ENCODE measurements at regions of chr9 and their contacts with region 1.

Region 1: GRCh38 chr9:129988607-129989361 is 54.2 kb downstream of the FNBP1 start:
- DNase-seq: no peak
- ATAC-seq: peak; percentile 25; the same call in 1 of the 2 replicates
- H3K4me3 ChIP-seq: no peak overlapping the region
- H3K27ac ChIP-seq: no peak overlapping the region
- H3K4me1 ChIP-seq: peaks cover 12% of the 10 kb centered on the region
- H3K27me3 ChIP-seq: no peaks in the 10 kb centered on the region
- CTCF ChIP-seq: no peak
- POLR2A ChIP-seq: no peak
- RAD21 ChIP-seq: no peak

Region 2: DNA sequence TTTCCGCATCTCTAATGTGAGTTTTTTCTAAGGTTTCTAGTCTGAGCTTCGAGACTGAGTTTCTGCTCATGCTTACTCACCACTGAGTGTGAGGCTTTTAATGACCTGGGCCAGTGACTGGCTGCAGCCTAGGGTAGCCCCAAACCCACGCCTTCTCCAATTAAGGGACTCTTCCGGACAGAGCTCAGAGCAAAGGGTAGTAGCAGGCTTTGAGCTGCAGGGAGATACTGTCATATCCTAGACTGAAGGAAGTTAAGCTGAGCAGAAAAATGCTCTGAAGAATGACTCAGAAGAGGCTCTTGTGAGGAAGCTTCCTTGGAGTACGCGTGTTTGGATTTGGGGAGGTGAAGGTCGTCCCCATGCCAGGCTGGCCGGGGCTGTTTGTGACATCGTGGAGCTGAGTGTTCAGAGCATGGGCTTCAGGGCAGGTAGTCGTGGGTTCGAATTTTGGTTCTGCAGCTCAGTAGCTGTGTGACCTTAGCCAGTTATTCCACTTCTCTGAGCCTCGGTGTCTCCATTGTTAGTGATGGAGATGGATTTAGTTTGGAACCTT is 150.0 kb before region 1 on chr9:
- CTCF ChIA-PET with region 1: no interaction called
- POLR2A ChIA-PET with region 1: no interaction called
- dilution Hi-C with region 1: no loop called
- in situ Hi-C with region 1: no loop called
- intact Hi-C with region 1: no loop called
- DNase-seq: peak; percentile 91
- ATAC-seq: peak; percentile 65
- H3K4me3 ChIP-seq: no peak overlapping the region
- H3K27ac ChIP-seq: peak overlapping the region; percentile 41
- H3K4me1 ChIP-seq: peaks cover 13% of the 10 kb centered on the region
- H3K27me3 ChIP-seq: no peaks in the 10 kb centered on the region
- CTCF ChIP-seq: no peak; the same call in 1 of the 2 replicates
- POLR2A ChIP-seq: 0 out of 2 replicates have a peak, but pooled peaks have one; percentile 27
- RAD21 ChIP-seq: peak; percentile 12; the same call in 1 of the 2 replicates

Region 3: GRCh38 chr9:129932303-129933151 is 56.3 kb before region 1 on chr9:
- CTCF ChIA-PET with region 1: no interaction called
- POLR2A ChIA-PET with region 1: interaction called, 12 read pairs
- dilution Hi-C with region 1: no loop called
- in situ Hi-C with region 1: no loop called
- intact Hi-C with region 1: no loop called
- DNase-seq: peak; percentile 10
- ATAC-seq: peak; percentile 56
- H3K4me3 ChIP-seq: no peak overlapping the region
- H3K27ac ChIP-seq: peak overlapping the region; percentile 3; the same call in 1 of the 2 replicates
- H3K4me1 ChIP-seq: peaks cover 19% of the 10 kb centered on the region
- H3K27me3 ChIP-seq: no peaks in the 10 kb centered on the region
- CTCF ChIP-seq: no peak
- POLR2A ChIP-seq: no peak
- RAD21 ChIP-seq: no peak

Region 4: DNA sequence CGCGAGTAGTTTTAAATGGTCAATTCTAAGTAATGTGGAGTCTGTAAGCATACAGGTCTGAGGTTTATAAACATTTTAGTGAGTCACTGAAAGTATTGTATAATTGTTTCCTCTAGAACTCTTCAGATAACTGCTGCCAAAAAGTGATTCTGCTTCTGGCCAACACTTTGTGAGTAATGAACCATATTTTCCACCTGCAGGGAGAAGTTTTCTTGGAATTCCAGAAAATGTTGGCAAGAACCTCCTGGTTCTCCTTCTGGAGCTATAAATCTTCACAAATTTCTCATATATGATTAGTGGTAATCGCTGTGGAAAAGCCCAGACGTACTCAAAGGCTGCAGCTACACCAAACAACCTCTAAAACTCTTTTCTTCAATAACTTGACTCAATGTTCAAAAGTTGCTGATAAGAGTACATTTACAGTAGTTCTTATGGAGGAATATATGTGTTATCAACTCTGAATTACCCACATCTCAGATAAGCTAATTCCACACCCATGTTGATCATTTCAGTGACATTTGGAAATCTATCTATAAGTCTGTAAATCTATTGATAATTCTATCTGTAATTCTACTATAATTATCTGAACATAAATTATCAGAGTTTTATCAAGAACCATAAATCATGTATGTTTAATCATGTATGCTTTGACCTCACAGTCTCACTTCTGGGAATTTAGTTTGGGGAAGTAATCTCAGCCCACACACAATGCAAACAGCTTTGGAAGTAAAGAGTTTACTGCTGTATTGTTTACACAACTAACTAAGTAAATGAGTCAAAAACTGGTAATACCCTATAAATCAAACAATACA is 19.9 kb before region 1 on chr9:
- CTCF ChIA-PET with region 1: no interaction called
- POLR2A ChIA-PET with region 1: no interaction called
- dilution Hi-C with region 1: no loop called
- in situ Hi-C with region 1: no loop called
- intact Hi-C with region 1: loop called (anchors 2 kb)
- DNase-seq: peak; percentile 93
- ATAC-seq: peak; percentile 69
- H3K4me3 ChIP-seq: no peak overlapping the region
- H3K27ac ChIP-seq: no peak overlapping the region
- H3K4me1 ChIP-seq: peaks cover 20% of the 10 kb centered on the region
- H3K27me3 ChIP-seq: no peaks in the 10 kb centered on the region
- CTCF ChIP-seq: no peak
- POLR2A ChIP-seq: no peak
- RAD21 ChIP-seq: no peak

Region 5: GRCh38 chr9:130018260-130018659 is 29.5 kb after region 1 on chr9:
- CTCF ChIA-PET with region 1: no interaction called
- POLR2A ChIA-PET with region 1: no interaction called
- dilution Hi-C with region 1: no loop called
- in situ Hi-C with region 1: no loop called
- intact Hi-C with region 1: no loop called
- DNase-seq: peak; percentile 33
- ATAC-seq: no peak
- H3K4me3 ChIP-seq: no peak overlapping the region
- H3K27ac ChIP-seq: no peak overlapping the region
- H3K4me1 ChIP-seq: peaks cover 5% of the 10 kb centered on the region
- H3K27me3 ChIP-seq: peaks cover 2% of the 10 kb centered on the region; the same call in 1 of the 2 replicates
- CTCF ChIP-seq: no peak
- POLR2A ChIP-seq: no peak
- RAD21 ChIP-seq: no peak

Region 6: DNA sequence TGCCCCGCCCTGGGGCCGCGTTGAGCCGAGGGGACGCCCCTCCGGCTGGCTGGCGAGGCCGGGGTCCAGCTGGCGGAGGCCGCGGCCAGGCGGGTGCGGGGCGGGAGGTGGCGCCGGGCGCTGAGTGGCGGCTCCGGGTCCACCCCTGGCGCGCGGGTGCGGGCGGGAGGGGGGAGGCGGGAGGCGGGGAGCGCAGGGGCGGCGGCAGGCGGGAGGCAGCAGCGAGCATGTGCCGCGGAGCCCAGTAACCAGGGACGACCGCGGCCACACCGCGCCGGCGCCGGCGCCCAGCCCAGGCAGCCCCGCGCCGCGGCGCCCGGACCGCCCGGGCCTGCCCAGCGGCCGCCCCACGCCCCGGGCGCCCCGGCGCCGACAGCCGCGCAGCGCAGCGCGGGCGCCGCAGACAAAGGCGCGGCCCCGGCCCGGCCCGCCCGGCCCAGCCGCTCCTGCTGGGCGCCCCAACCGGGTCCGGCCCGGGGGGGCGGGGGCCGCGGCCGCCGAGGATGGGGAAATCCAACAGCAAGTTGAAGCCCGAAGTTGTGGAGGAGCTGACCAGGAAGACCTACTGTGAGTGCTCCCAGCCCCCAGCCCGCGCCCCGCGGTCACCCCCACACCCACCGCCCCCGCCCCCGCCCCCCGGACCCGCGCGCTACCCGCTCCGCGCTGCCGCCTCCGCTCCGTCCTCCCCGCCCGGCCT is 183.5 kb after region 1 on chr9 and contains the start of gene NCS1:
- CTCF ChIA-PET with region 1: no interaction called
- POLR2A ChIA-PET with region 1: no interaction called
- dilution Hi-C with region 1: no loop called
- in situ Hi-C with region 1: no loop called
- intact Hi-C with region 1: no loop called
- DNase-seq: peak; percentile 61
- ATAC-seq: peak; percentile 89
- H3K4me3 ChIP-seq: peak within 1 kb of the TSS; percentile 71
- H3K27ac ChIP-seq: peak within 1 kb of the TSS; percentile 70
- H3K4me1 ChIP-seq: peaks cover 10% of the 10 kb centered on the region
- H3K27me3 ChIP-seq: no peaks in the 10 kb centered on the region
- CTCF ChIP-seq: no peak
- POLR2A ChIP-seq: no peak
- RAD21 ChIP-seq: no peak
- total RNA-seq, gene NCS1: 35.8 and 41.0 TPM in 2 replicates